ENCODE measurements at regions of chrX and their contacts with region 1.

Region 1: GRCh38 chrX:19372170-19372546 is 28.4 kb downstream of the PDHA1 start:
- DNase-seq: peak; percentile 53 to 77
- H3K4me3 ChIP-seq: peak overlapping the region; percentile 51; the same call in 1 of the 2 replicates
- H3K27ac ChIP-seq: no peak overlapping the region
- H3K4me1 ChIP-seq: no peaks in the 10 kb centered on the region
- H3K27me3 ChIP-seq: no peaks in the 10 kb centered on the region
- CTCF ChIP-seq: peak; percentile 82

Region 2: DNA sequence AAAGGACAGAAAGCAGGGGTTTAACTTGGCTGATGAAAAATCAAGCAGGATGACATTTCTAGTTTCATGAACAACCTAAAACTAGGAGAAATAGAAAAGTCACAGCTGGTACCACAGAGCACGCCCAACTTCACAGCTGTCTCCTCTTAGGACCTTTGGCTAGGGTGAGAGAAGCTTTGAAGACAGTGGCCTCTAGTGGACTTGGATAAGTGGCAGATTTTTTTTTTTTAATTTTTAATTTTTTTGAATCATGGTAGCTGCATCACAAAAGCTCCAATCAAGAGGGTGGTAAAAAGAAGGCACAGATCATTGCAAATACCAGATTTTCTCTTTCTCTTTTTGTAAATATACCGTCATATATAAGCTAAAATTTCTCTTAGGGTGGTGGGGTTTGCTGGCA is 163.3 kb after region 1 on chrX:
- CTCF ChIA-PET with region 1: no interaction called
- POLR2A ChIA-PET with region 1: no interaction called
- intact Hi-C with region 1: loop called (anchors 2 kb)
- DNase-seq: peak in 1 of 2 experiments; percentile 38
- H3K4me3 ChIP-seq: no peak overlapping the region
- H3K27ac ChIP-seq: no peak overlapping the region
- H3K4me1 ChIP-seq: no peaks in the 10 kb centered on the region
- H3K27me3 ChIP-seq: no peaks in the 10 kb centered on the region
- CTCF ChIP-seq: peak; percentile 57

Region 3: DNA sequence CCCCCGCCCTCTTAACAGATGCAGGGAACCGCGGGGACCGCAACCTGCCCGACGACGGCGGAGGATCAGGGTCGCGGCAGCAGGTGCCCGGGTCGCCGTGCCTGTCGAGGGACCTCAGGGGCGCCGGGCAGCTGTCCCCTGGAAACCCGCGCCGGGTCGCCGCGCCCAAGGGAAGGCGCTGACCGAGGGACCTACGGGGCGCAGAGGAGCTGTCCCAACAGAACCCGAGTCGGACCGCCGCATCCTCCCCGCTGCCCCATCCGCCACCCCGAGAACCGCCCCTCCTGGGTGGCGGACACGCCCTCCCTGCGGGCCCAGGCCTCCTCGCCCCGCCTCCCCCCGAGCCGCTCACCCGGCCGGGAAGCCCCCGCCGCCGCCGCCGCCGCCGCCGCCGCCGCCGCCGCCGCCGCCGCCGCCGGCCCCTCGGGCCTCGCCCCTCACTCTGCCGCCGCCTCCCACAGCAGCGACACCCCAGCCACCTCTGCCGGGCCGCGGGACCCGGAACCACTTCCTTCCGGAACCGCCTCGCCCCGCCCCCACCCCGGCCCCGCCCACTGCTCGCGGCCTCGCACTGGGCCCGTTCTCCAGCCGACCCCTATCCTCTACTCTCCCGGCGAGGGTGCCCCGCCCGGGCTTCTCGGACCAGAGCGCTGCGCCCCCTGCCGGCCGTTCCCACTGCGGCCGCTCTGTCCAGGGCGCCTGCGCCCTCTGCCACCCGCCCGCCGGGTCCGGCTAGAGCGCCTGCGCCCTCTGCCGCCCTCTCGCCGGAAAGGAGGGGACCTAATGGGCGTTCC is 618.6 kb after region 1 on chrX and contains the start of gene BCLAF3:
- CTCF ChIA-PET with region 1: no interaction called
- POLR2A ChIA-PET with region 1: no interaction called
- intact Hi-C with region 1: loop called (anchors 5 kb)
- DNase-seq: peak; percentile 73 to 93
- H3K4me3 ChIP-seq: peak within 1 kb of the TSS; percentile 80
- H3K27ac ChIP-seq: 0 out of 2 replicates have a peak within 1 kb of the TSS, but pooled peaks have one; percentile 21
- H3K4me1 ChIP-seq: peaks cover 6% of the 10 kb centered on the region; the same call in 1 of the 2 replicates
- H3K27me3 ChIP-seq: no peaks in the 10 kb centered on the region
- CTCF ChIP-seq: peak; percentile 78
- total RNA-seq, gene BCLAF3: 6.7 and 7.9 TPM in 2 replicates

Region 4: DNA sequence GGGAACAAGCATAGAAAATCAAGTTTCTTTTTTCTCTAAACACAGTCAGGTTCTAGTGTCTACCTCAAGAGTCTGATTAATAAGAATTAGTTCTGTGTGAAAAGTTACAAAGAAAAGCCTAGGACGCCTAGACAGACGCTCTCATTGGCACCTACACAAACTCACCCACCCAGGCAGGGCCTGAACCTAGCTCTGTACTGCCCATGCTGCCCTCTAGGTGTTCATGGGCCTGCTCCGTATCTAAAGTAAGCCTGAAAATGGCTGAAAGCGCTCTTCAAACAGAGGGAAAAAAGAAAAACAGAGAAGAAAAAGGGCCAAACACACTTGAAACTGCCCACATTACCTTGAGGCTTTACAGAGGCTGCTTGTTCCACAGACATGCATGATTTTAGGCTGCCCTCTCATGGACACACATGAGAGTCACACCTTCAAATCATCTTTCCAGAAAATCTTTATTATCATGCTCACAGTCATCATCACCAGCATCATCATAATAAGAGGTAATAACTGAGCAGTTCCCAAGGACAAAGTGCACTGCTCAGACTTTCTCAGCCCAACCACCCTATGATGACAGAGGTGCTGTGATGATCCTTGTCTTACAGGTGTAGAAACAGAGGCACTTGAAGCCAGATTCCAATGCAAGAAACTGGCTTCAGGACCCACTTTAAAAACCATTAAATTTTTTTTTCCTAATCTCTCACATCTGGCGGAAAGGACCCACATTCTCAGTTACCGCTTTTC is 695.0 kb after region 1 on chrX:
- CTCF ChIA-PET with region 1: no interaction called
- POLR2A ChIA-PET with region 1: no interaction called
- intact Hi-C with region 1: loop called (anchors 5 kb)
- DNase-seq: peak; percentile 21 to 55
- H3K4me3 ChIP-seq: peak overlapping the region; percentile 29; the same call in 1 of the 2 replicates
- H3K27ac ChIP-seq: peak overlapping the region; percentile 49
- H3K4me1 ChIP-seq: peaks cover 22% of the 10 kb centered on the region
- H3K27me3 ChIP-seq: no peaks in the 10 kb centered on the region
- CTCF ChIP-seq: peak; percentile 76

Region 5: GRCh38 chrX:20141281-20142220 is 769.4 kb after region 1 on chrX and contains the start of gene EIF1AX:
- CTCF ChIA-PET with region 1: no interaction called
- POLR2A ChIA-PET with region 1: no interaction called
- intact Hi-C with region 1: loop called (anchors 10 kb)
- DNase-seq: peak; percentile 90 to 96
- H3K4me3 ChIP-seq: peak within 1 kb of the TSS; percentile 95
- H3K27ac ChIP-seq: peak within 1 kb of the TSS; percentile 61
- H3K4me1 ChIP-seq: peaks cover 13% of the 10 kb centered on the region
- H3K27me3 ChIP-seq: no peaks in the 10 kb centered on the region
- CTCF ChIP-seq: no peak
- total RNA-seq, gene EIF1AX: 77.3 TPM in 2 replicates

Region 6: GRCh38 chrX:20530406-20530921 is 1158.3 kb after region 1 on chrX:
- CTCF ChIA-PET with region 1: no interaction called
- POLR2A ChIA-PET with region 1: no interaction called
- intact Hi-C with region 1: loop called (anchors 2 kb)
- DNase-seq: peak; percentile 47 to 52
- H3K4me3 ChIP-seq: peak overlapping the region; percentile 46; the same call in 1 of the 2 replicates
- H3K27ac ChIP-seq: no peak overlapping the region
- H3K4me1 ChIP-seq: peaks cover 15% of the 10 kb centered on the region
- H3K27me3 ChIP-seq: no peaks in the 10 kb centered on the region
- CTCF ChIP-seq: peak; percentile 85

Measured in PC-9 (cell line).